ENCODE measurements at regions of chr12 and their contacts with region 1.

Region 1: DNA sequence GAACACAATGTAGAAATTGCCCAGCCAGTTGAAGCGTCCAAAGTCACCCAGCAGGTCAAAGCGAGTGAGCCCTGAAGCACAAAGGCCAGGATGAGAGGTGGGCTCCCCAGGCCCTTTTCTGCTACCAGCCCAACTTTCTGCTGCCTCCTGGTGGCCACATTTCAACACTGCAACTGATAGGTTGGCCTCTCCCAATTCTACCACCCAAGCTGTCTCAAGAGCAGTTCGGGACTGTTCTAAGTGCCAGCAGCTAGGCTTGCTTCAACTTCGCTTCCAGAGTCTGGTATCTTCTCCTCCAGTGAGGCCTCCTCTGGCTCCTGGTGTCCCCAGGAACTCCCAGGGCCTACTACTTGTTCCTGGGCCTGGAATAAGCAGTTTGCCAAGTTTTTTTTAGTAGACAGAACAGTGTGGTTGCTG is 3.4 kb upstream of the DHH start:
- DNase-seq: peak; percentile 75
- ATAC-seq: peak; percentile 70
- H3K4me3 Mint-ChIP-seq: no peak overlapping the region
- H3K27ac Mint-ChIP-seq: no peak overlapping the region
- H3K4me1 Mint-ChIP-seq: peaks cover 13% of the 10 kb centered on the region
- H3K27me3 Mint-ChIP-seq: peaks cover 22% of the 10 kb centered on the region

Region 2: GRCh38 chr12:49069507-49070346 is 28.3 kb before region 1 on chr12 and contains the start of gene RHEBL1:
- CTCF ChIA-PET with region 1: interaction called, 242 read pairs
- POLR2A ChIA-PET with region 1: no interaction called
- DNase-seq: peak; percentile 100
- ATAC-seq: peak; percentile 100
- H3K4me3 Mint-ChIP-seq: peak within 1 kb of the TSS; percentile 100
- H3K27ac Mint-ChIP-seq: peak within 1 kb of the TSS; percentile 97
- H3K4me1 Mint-ChIP-seq: peaks cover 31% of the 10 kb centered on the region
- H3K27me3 Mint-ChIP-seq: no peaks in the 10 kb centered on the region
- total RNA-seq, gene RHEBL1: 9.5 to 9.9 TPM

Region 3: DNA sequence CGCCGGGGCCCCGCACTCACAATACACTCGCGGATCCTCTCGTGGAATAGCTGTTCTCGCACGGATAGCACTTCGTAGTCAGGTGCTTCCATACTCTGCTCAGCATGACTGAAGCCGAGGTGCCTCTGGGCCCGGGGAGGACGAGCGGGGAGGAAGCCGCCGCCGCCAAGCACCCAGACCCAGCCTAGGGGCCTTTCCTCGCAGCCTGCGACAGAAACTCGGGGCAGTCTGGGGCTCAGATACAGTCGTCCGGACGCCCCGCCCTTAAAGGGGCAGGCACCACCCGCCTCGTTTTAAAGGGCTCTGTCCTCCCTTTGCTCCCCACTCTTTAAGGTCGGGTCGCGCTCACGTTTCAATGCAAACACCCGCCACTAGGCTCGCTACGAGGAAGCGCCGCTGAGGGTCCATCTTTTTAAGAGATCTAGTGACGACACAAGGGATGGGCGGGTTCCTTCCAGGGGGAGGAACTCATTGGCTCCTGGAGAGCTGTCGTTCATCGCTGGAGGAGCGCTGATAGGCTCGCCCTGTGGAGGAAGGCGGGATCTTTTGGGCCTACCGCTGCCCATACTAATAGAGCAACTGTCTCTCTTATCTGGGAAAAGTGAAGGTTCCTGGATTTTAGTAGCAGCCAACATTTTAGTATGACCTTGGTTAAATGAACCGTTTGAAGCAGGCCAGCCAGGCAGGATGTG is 12.6 kb after region 1 on chr12 and contains the start of gene LMBR1L:
- CTCF ChIA-PET with region 1: interaction called, 88 read pairs
- POLR2A ChIA-PET with region 1: interaction called, 9 read pairs
- DNase-seq: peak; percentile 99
- ATAC-seq: peak; percentile 99
- H3K4me3 Mint-ChIP-seq: peak within 1 kb of the TSS; percentile 97
- H3K27ac Mint-ChIP-seq: peak within 1 kb of the TSS; percentile 79
- H3K4me1 Mint-ChIP-seq: peaks cover 29% of the 10 kb centered on the region
- H3K27me3 Mint-ChIP-seq: no peaks in the 10 kb centered on the region
- total RNA-seq, gene LMBR1L: 35.8 to 37.8 TPM

Region 4: GRCh38 chr12:49232940-49233841 is 135.1 kb after region 1 on chr12:
- CTCF ChIA-PET with region 1: interaction called, 10 read pairs
- POLR2A ChIA-PET with region 1: no interaction called
- DNase-seq: no peak
- ATAC-seq: no peak
- H3K4me3 Mint-ChIP-seq: no peak overlapping the region
- H3K27ac Mint-ChIP-seq: peak overlapping the region; percentile 29
- H3K4me1 Mint-ChIP-seq: peaks cover 21% of the 10 kb centered on the region
- H3K27me3 Mint-ChIP-seq: peaks cover 10% of the 10 kb centered on the region